ENCODE measurements at regions of chr12 and their contacts with region 1.

Region 1: GRCh38 chr12:116551952-116552772 is 7.0 kb upstream of the MAP1LC3B2 start:
- DNase-seq: peak; percentile 94
- H3K4me3 ChIP-seq: peak overlapping the region; percentile 34
- H3K27ac ChIP-seq: peak overlapping the region; percentile 88
- H3K4me1 ChIP-seq: peaks cover 23% of the 10 kb centered on the region
- H3K27me3 ChIP-seq: no peaks in the 10 kb centered on the region
- CTCF ChIP-seq: no peak

Region 2: GRCh38 chr12:116528067-116528466 is 24.1 kb before region 1 on chr12:
- CTCF ChIA-PET with region 1: no interaction called
- POLR2A ChIA-PET with region 1: interaction called, 17 read pairs
- intact Hi-C with region 1: loop called (anchors 2 kb)
- DNase-seq: peak; percentile 87
- H3K4me3 ChIP-seq: no peak overlapping the region
- H3K27ac ChIP-seq: peak overlapping the region; percentile 66
- H3K4me1 ChIP-seq: peaks cover 33% of the 10 kb centered on the region
- H3K27me3 ChIP-seq: no peaks in the 10 kb centered on the region
- CTCF ChIP-seq: no peak

Region 3: GRCh38 chr12:116533343-116534251 is 18.6 kb before region 1 on chr12:
- CTCF ChIA-PET with region 1: no interaction called
- POLR2A ChIA-PET with region 1: interaction called, 17 read pairs
- intact Hi-C with region 1: loop called (anchors 2 kb)
- DNase-seq: peak; percentile 92
- H3K4me3 ChIP-seq: peak overlapping the region; percentile 72
- H3K27ac ChIP-seq: peak overlapping the region; percentile 68
- H3K4me1 ChIP-seq: peaks cover 5% of the 10 kb centered on the region
- H3K27me3 ChIP-seq: no peaks in the 10 kb centered on the region
- CTCF ChIP-seq: no peak

Region 4: DNA sequence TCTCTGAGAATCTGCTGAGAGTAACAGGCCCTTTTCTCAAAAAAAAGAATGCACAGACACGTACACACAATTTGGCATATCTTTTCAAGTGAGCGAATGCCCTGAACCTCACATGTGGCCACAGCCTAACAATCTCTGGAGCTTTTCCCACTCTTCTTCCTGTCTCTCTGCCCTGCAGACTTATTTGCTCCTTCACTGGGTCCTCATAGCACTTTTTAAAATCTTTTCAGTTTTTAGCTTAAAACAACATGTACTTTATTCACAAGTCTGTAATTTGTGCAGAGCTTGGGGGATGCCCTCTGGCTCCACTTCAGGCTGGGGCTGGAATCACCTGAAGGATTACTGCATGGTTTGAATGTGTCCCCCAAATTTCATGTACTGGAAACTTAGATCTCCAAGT is 16.0 kb after region 1 on chr12:
- CTCF ChIA-PET with region 1: no interaction called
- POLR2A ChIA-PET with region 1: no interaction called
- intact Hi-C with region 1: no loop called
- DNase-seq: no peak
- H3K4me3 ChIP-seq: no peak overlapping the region
- H3K27ac ChIP-seq: no peak overlapping the region
- H3K4me1 ChIP-seq: no peaks in the 10 kb centered on the region
- H3K27me3 ChIP-seq: no peaks in the 10 kb centered on the region
- CTCF ChIP-seq: no peak